Activated CD8-positive, alpha-beta T cell treated with anti-CD3 and anti-CD28 coated beads, Interleukin-2, amount 10 ng/mL, durations not matched to agents 7 days and 5 days (primary cell): ENCODE measurements at regions of chr11 and their contacts with region 1.

Region 1: DNA sequence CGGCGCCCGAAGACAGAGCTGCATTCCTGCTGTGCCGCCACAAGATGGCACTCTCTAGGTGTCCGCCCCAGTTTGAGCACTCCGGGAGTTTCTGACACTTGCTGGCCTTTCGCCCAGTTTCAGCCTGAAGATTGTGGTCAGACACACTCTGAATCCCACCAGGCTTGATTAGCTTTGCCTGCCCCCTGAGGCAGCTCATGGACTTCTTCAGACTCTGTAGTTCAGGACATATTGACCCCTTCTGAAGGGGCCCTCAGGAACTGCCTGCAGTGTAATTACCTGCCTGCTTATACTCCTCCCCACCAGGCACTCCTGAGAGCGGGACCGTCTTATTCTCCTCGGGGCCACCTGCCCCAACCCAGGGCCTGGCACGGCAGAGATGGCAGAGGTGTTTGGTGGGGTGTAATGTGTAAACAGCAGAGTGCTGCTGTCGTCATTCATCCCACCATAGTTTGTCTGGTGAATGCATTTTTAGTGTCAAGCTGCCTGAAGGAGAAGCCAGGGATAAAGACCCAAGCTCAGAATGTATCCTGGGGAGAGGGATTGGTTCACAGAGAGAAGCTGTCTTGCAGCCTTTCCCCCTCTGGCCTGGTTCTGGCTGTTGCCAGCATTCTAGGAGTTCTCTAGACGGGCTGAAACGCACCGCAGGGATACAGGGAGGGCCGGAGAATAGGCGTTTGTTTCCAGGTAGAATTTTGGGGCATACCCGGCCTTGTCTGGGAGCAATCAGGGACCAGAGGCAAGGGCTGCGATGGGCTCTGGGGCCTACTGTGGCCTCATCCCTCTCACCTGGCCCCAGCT is 46.4 kb downstream of the EIF3F start:
- DNase-seq: peak; percentile 53
- ATAC-seq: peak; percentile 83
- H3K4me3 Mint-ChIP-seq: no peak overlapping the region
- H3K27ac Mint-ChIP-seq: no peak overlapping the region
- H3K4me1 Mint-ChIP-seq: peaks cover 2% of the 10 kb centered on the region
- H3K27me3 Mint-ChIP-seq: peaks cover 11% of the 10 kb centered on the region

Region 2: GRCh38 chr11:8018484-8019313 is 14.8 kb before region 1 on chr11:
- CTCF ChIA-PET with region 1: interaction called, 22 read pairs
- POLR2A ChIA-PET with region 1: no interaction called
- DNase-seq: peak; percentile 75
- ATAC-seq: peak; percentile 85
- H3K4me3 Mint-ChIP-seq: peak overlapping the region; percentile 42
- H3K27ac Mint-ChIP-seq: peak overlapping the region; percentile 5
- H3K4me1 Mint-ChIP-seq: peaks cover 11% of the 10 kb centered on the region
- H3K27me3 Mint-ChIP-seq: peaks cover 53% of the 10 kb centered on the region

Region 3: GRCh38 chr11:8092587-8093424 is 59.3 kb after region 1 on chr11:
- CTCF ChIA-PET with region 1: interaction called, 93 read pairs
- POLR2A ChIA-PET with region 1: no interaction called
- DNase-seq: peak; percentile 52
- ATAC-seq: peak; percentile 72
- H3K4me3 Mint-ChIP-seq: no peak overlapping the region
- H3K27ac Mint-ChIP-seq: no peak overlapping the region
- H3K4me1 Mint-ChIP-seq: no peaks in the 10 kb centered on the region
- H3K27me3 Mint-ChIP-seq: no peaks in the 10 kb centered on the region